ENCODE measurements at regions of chr5 and their contacts with region 1.

Region 1: DNA sequence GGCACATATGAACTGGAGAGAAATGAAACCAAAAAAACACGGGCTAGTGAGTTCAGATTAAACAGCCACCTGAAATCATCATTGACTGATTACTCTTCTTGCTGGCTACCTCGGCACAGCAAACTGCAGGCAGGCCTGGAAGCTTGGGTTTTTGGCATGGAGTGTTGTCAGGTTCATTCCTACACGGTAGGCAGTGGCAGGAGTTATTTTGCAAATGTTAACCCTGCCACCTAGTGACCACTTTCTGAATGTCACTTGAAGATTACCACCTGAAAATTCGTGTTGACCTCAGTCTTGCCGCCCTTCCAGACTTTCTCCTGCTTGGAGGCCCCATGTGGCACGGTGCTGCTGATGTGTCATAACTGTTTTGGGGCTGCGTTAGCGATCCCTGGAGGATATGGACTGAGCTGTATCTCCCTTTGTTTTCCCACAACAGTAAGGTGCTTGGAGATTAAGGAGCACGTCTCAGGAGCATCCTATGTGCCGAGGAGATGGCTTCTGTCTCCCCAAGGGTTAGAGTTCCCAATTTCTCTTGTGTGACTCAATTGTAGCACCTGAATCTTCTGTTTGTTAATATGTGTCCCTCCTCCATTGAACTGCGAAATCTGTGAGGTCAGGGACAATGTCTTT is 12.7 kb upstream of the CD180 start:
- DNase-seq: peak in 1 of 2 donors; percentile 80
- ATAC-seq: peak; percentile 69 to 87 (median 84)
- H3K4me3 ChIP-seq: no peak overlapping the region
- H3K27ac ChIP-seq: peak overlapping the region in 1 of 10 donors; percentile 84
- H3K4me1 ChIP-seq: peaks cover 0 to 54% (median 6%) of the 10 kb centered on the region in 9 donors
- H3K27me3 ChIP-seq: no peaks in the 10 kb centered on the region
- CTCF ChIP-seq: peak; percentile 62 to 88 (median 81)

Region 2: DNA sequence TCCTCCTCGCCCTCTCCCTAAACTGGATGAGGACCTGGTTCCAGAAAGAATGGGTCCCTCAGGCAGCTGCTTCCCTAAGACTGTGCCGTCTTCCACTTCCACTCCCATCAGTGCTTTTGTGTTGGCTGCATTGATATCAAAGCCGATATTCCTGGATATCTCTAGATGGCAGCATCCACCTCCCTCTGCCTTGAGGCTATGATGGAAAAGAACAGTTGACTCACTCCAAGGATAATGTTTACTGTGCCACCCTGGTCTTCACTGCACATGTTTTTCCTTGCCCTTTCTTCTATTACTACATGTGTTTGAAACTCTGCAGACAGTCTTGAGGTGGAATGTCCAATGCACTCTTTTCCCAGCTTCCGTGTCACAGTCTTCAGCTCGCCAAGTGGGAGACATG is 401.5 kb before region 1 on chr5:
- intact Hi-C with region 1: loop called in 8 of 10 experiments (anchors 5 to 10 kb)
- DNase-seq: no peak
- ATAC-seq: peak in 7 of 8 donors; percentile 31 to 73 (median 66)
- H3K4me3 ChIP-seq: no peak overlapping the region
- H3K27ac ChIP-seq: no peak overlapping the region
- H3K4me1 ChIP-seq: peaks cover 0 to 9% (median 0%) of the 10 kb centered on the region in 9 donors
- H3K27me3 ChIP-seq: no peaks in the 10 kb centered on the region
- CTCF ChIP-seq: peak in 8 of 9 donors; percentile 8 to 60 (median 42)

Region 3: DNA sequence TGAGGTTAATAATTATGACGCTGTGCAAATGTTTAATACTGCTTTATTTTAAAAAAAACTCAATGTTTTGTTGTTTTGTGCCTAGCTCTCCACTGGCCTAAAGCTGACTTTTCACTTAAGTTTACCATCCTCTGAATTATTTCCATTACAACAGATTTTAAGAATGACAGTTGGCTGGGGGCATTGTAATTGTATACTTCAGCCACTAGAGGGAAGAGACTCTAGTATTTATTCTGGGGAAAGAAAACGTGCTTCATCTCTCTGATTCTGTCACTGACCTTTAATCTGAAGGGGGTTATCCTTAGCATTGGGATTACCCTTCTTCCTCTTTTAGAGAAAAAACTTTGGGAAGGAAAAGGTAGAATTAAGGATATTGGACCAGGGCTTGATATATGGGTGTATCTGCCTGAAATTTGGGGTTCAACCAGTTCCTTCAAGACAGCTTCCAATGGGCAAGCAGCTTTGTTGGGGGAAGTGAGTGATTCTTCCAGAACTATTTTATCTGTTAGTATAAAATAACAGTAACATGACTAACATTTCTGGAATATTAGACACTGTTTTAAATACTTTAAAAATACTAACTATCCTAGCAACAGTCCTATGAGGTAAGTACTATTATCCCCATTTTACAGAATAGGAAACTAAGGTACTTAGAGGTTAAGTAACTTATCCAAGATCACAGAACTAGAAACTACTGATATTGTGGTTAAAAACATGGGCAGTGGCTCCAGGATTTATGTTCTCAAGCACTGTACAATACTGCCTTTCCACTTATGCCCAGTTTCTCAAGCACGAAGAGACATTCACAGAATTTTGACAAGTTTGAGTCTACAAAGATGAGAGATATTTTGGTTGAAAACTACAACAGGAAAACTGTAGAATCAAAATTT is 221.1 kb before region 1 on chr5:
- intact Hi-C with region 1: loop called in 7 of 10 experiments (anchors 5 to 10 kb)
- DNase-seq: no peak
- ATAC-seq: peak in 6 of 8 donors; percentile 37 to 72 (median 44)
- H3K4me3 ChIP-seq: no peak overlapping the region
- H3K27ac ChIP-seq: no peak overlapping the region
- H3K4me1 ChIP-seq: peaks cover 0 to 61% (median 38%) of the 10 kb centered on the region in 9 donors
- H3K27me3 ChIP-seq: no peaks in the 10 kb centered on the region
- CTCF ChIP-seq: peak; percentile 68 to 87 (median 81)

Region 4: DNA sequence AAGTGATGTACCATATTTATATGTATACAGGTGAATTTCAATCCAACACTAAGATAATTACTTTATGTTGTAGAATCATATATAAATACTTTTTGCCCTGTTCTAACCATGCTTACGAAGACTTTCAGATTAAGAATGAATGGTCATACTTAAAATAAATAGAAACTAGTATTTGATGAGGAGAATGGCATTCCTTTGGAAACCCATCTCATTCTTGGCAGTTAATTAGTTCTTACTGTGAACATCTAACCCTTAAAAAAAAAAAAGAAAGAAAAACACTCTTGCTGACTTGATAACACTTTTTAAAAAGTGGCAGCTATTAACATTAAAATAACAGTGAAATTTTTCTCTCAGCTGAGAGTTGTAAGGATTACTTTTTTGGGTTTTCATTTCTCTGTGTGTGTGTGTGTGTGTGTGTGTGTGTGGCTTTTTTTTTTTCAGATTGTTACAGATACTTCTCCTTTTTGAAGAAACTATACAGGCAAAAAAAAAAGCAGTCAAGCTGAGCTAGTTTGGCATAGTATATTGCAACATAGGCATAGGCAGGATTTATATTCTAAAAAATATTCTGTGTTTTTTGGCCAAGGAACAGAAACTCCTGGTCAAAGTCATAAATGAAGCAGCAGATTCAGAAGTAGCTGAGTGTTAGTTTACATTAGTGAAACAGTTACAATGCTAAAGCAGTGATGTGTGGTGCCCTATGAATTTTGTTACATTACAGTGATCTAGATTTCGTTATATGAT is 176.2 kb before region 1 on chr5:
- intact Hi-C with region 1: no loop called
- DNase-seq: no peak
- ATAC-seq: no peak
- H3K4me3 ChIP-seq: no peak overlapping the region
- H3K27ac ChIP-seq: peak overlapping the region in 4 of 10 donors; percentile 4 to 67 (median 52)
- H3K4me1 ChIP-seq: peaks cover 10 to 91% (median 80%) of the 10 kb centered on the region in 9 donors
- H3K27me3 ChIP-seq: no peaks in the 10 kb centered on the region
- CTCF ChIP-seq: no peak

Region 5: DNA sequence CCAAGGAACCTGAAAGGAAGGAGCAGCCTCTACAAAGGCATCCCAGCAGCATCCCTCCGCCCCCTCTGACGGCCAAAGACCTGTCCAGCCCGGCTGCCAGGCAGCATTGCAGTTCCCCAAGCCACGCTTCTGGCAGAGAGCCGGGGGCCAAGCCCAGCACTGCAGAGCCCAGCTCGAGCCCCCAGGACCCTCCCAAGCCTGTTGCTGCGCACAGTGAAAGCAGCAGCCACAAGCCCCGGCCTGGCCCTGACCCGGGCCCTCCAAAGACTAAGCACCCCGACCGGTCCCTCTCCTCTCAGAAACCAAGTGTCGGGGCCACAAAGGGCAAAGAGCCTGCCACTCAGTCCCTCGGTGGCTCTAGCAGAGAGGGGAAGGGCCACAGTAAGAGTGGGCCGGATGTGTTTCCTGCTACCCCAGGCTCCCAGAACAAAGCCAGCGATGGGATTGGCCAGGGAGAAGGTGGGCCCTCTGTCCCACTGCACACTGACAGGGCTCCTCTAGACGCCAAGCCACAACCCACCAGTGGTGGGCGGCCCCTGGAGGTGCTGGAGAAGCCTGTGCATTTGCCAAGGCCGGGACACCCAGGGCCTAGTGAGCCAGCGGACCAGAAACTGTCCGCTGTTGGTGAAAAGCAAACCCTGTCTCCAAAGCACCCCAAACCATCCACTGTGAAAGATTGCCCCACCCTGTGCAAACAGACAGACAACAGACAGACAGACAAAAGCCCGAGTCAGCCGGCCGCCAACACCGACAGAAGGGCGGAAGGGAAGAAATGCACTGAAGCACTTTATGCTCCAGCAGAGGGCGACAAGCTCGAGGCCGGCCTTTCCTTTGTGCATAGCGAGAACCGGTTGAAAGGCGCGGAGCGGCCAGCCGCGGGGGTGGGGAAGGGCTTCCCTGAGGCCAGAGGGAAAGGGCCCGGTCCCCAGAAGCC is 43.5 kb before region 1 on chr5:
- intact Hi-C with region 1: loop called in 9 of 10 experiments (anchors 1 to 5 kb)
- DNase-seq: peak; percentile 83 to 88
- ATAC-seq: peak; percentile 80 to 94 (median 85)
- H3K4me3 ChIP-seq: peak overlapping the region in 9 of 10 donors; percentile 22 to 52 (median 37)
- H3K27ac ChIP-seq: peak overlapping the region; percentile 63 to 98 (median 84)
- H3K4me1 ChIP-seq: peaks cover 0 to 30% (median 15%) of the 10 kb centered on the region in 9 donors
- H3K27me3 ChIP-seq: no peaks in the 10 kb centered on the region
- CTCF ChIP-seq: peak; percentile 53 to 87 (median 76)